A549 (cell line): ENCODE measurements at regions of chr5 and their contacts with region 1.

Region 1: DNA sequence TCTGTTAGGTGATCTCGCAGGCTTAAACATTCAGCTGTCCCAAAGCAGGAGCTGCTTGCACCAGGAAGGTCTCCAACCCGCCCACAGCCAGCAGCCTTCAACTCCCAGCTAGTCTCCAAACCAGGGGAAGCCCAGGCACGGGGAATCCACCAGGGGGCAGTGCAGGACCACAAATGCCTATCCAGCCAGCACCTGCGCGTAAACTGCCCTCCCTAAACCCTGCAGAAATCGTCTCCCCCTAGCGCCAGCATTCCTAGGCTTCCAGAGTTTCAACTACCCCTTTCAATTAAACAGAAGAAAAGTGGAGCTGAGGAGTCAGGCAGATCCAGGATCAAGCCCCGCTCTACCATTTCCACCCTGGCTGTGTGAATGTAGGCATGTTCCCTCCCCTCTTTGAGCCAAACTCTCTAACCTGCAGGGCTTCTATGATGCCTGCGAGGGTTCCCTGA is 72.0 kb downstream of the HRH2 start:
- DNase-seq: peak; percentile 93 to 96
- ATAC-seq: peak; percentile 95 to 98
- H3K4me3 ChIP-seq: no peak overlapping the region
- H3K27ac ChIP-seq: peak overlapping the region; percentile 77 to 78
- H3K4me1 ChIP-seq: peaks cover 24% of the 10 kb centered on the region
- CTCF ChIP-seq: peak; percentile 99
- EP300 ChIP-seq: no peak
- POLR2A ChIP-seq: no peak
- RAD21 ChIP-seq: peak; percentile 100

Region 2: DNA sequence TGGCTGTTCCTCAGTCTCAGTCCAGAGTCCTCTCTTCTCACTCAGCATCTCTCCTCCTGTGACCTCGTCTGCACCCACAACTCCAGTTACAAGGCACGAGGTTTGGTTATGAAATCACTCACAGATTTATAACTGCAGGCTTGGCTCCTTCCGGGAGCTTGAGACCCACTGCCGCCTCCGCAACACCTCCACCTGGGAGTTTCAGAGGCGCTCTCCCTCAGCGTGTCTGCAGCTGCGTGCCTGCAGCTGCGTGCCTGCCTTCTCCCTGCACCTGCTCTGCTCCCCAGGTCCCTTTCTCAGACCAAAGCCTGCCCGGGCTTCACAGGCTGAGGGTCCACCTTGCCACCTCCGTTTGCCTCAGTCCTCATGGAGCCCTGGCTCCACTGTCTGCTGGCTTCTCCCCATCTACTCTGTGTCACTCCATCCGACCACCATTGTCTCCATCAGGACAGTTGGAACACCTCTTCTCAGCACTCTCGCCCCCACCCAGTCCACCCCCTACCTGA is 20.5 kb before region 1 on chr5:
- CTCF ChIA-PET with region 1: interaction called, 21 read pairs
- POLR2A ChIA-PET with region 1: no interaction called
- DNase-seq: no peak
- ATAC-seq: no peak
- H3K4me3 ChIP-seq: no peak overlapping the region
- H3K27ac ChIP-seq: no peak overlapping the region
- H3K4me1 ChIP-seq: no peaks in the 10 kb centered on the region
- CTCF ChIP-seq: no peak
- EP300 ChIP-seq: no peak
- POLR2A ChIP-seq: no peak
- RAD21 ChIP-seq: no peak

Region 3: DNA sequence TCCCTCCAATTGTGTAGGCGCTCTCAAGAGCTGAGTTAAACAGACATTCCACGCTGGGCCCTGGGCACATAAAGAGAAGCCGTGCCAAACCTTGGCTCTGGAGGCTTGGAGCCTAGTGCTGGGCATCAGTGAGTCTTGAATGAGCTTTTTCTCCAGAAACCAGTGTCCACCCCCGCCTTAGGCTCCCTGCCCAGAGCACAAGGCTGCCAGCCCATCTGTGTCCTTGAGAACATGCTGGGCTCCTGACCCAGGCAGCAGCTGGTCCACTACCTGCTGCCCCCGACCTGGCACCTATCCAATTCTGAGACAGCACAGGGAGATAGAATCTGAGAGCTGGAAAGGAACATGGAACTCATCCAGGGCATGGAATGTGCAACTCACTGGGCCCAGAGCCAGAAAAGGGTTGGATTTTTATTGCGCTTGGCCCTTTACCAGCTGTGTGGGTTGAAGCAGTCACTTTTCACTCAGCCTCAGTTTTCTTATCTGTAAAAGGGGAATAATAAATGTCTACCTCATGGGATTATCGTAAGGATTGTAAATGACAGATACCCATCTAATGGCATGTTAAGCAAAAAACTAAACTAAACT is 49.2 kb after region 1 on chr5:
- CTCF ChIA-PET with region 1: interaction called, 14 read pairs
- POLR2A ChIA-PET with region 1: no interaction called
- DNase-seq: peak; percentile 40 to 71
- ATAC-seq: peak; percentile 74 to 79; a peak in 5 of 6 replicates
- H3K4me3 ChIP-seq: no peak overlapping the region
- H3K27ac ChIP-seq: peak overlapping the region; percentile 39 to 60; a peak in 4 of 6 replicates
- H3K4me1 ChIP-seq: peaks cover 23% of the 10 kb centered on the region
- CTCF ChIP-seq: no peak
- EP300 ChIP-seq: no peak
- POLR2A ChIP-seq: no peak
- RAD21 ChIP-seq: no peak

Region 4: GRCh38 chr5:175823731-175824525 is 94.1 kb after region 1 on chr5:
- CTCF ChIA-PET with region 1: interaction called, 12 read pairs
- POLR2A ChIA-PET with region 1: no interaction called
- DNase-seq: no peak
- ATAC-seq: no peak
- H3K4me3 ChIP-seq: no peak overlapping the region
- H3K27ac ChIP-seq: peak overlapping the region; percentile 63 to 80
- H3K4me1 ChIP-seq: peaks cover 41% of the 10 kb centered on the region
- CTCF ChIP-seq: no peak
- EP300 ChIP-seq: no peak
- POLR2A ChIP-seq: no peak
- RAD21 ChIP-seq: no peak

Region 5: GRCh38 chr5:175867587-175868347 is 137.9 kb after region 1 on chr5:
- CTCF ChIA-PET with region 1: interaction called, 232 read pairs
- POLR2A ChIA-PET with region 1: interaction called, 4 read pairs
- DNase-seq: peak; percentile 95 to 96
- ATAC-seq: peak; percentile 55 to 64
- H3K4me3 ChIP-seq: peak overlapping the region; percentile 82
- H3K27ac ChIP-seq: peak overlapping the region; percentile 97 to 99
- H3K4me1 ChIP-seq: peaks cover 78% of the 10 kb centered on the region
- CTCF ChIP-seq: peak; percentile 52
- EP300 ChIP-seq: peak; percentile 93; a peak in 4 of 5 replicates
- POLR2A ChIP-seq: no peak
- RAD21 ChIP-seq: peak; percentile 80

Region 6: GRCh38 chr5:176573564-176574296 is 843.9 kb after region 1 on chr5:
- CTCF ChIA-PET with region 1: interaction called, 14 read pairs
- POLR2A ChIA-PET with region 1: no interaction called
- DNase-seq: peak; percentile 58 to 70
- ATAC-seq: peak; percentile 60 to 87; a peak in 5 of 6 replicates
- H3K4me3 ChIP-seq: no peak overlapping the region
- H3K27ac ChIP-seq: no peak overlapping the region
- H3K4me1 ChIP-seq: 0 out of 3 replicates have a peak, but pooled peaks cover 6% of the 10 kb centered on the region
- CTCF ChIP-seq: peak; percentile 75
- EP300 ChIP-seq: no peak
- POLR2A ChIP-seq: no peak
- RAD21 ChIP-seq: peak; percentile 80